ENCODE measurements at regions of chr22 and their contacts with region 1.

Region 1: GRCh38 chr22:42780070-42780540 is 59.4 kb upstream of the A4GALT start:
- DNase-seq: peak in 1 of 2 donors; percentile 50
- H3K4me3 ChIP-seq: no peak overlapping the region
- H3K27ac ChIP-seq: no peak overlapping the region
- H3K4me1 ChIP-seq: no peaks in the 10 kb centered on the region
- H3K27me3 ChIP-seq: no peaks in the 10 kb centered on the region
- CTCF ChIP-seq: peak; percentile 96 to 98 (median 97)
- POLR2A ChIP-seq: no peak

Region 2: GRCh38 chr22:42829302-42829701 is 49.2 kb after region 1 on chr22:
- intact Hi-C with region 1: loop called (anchors 2 kb)
- DNase-seq: no peak
- H3K4me3 ChIP-seq: no peak overlapping the region
- H3K27ac ChIP-seq: no peak overlapping the region
- H3K4me1 ChIP-seq: no peaks in the 10 kb centered on the region
- H3K27me3 ChIP-seq: no peaks in the 10 kb centered on the region
- CTCF ChIP-seq: no peak
- POLR2A ChIP-seq: no peak

Measured in breast epithelium (tissue), 4 donors.